WTC11 (cell line): ENCODE measurements at regions of chr7 and their contacts with region 1.

Region 1: DNA sequence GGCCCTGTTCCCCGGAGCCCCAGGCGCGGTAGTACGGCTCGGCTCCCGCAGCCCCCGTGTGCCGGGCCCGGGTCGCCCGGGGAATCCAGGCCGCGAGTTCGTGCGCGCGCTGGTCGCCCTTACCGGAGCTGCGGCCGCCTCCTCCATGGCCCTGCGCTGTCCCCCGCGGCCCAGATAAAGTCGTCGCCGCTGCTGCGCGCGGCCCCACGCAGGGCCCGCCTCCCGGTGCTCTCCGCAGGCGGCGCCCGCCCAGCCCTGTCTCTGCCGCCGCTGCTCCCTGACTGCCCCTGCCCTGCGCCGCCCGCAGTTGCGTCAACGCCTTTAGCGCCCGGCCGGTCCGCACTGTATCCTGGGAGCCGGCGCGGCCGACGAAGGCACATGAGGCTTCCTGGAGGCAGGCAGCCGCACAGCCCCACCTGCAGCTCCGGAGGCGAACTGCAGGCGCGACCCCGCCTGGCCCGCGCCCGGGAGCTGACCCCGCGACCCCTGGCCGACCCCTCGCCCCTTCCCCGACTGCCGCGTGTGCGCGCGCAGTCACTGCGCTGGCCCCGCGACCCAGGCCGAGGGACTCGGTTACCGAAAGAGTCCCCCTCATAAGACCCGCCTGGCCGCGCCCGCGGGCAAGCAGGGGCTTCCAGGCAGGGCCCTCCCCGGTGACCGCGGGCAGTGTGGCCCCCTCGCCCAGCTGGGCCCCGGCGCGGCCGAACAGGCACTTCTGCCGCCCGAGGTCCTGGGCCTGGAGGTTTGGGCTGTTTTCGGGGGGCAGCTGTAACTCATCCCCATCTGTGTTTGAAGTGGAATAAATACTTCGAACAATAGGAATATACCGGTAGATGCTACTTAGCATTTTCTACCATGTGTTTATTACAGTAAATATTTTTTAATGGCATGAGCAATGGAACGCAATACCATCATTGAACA is 127.1 kb upstream of the ZNF746 start:
- DNase-seq: peak; percentile 94
- ATAC-seq: peak; percentile 91
- H3K4me3 Mint-ChIP-seq: peak overlapping the region; percentile 76
- H3K27ac Mint-ChIP-seq: no peak overlapping the region
- H3K4me1 Mint-ChIP-seq: peaks cover 24% of the 10 kb centered on the region
- H3K27me3 Mint-ChIP-seq: peaks cover 14% of the 10 kb centered on the region
- CTCF ChIP-seq: peak; percentile 85

Region 2: DNA sequence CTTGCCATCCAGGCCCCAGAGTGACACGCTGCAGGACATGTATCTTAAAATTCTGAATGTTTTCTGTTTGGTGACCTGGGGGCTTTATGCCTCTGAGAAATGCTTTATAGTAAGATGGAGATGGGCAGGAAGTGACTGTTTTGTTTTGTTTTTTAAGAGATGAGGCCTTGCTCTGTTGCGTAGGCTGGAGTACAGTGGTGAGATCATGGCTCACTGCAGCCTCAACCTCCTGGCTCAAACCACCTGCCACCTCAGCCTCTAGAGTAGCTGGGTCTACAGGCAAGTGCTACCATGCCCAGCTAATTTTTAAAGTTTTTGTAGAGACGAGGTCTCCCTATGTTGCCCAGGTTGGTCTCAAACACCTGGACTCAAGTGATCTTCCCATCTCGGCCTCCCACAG is 184.5 kb before region 1 on chr7:
- CTCF ChIA-PET with region 1: no interaction called
- POLR2A ChIA-PET with region 1: no interaction called
- DNase-seq: no peak
- ATAC-seq: no peak
- H3K4me3 Mint-ChIP-seq: no peak overlapping the region
- H3K27ac Mint-ChIP-seq: no peak overlapping the region
- H3K4me1 Mint-ChIP-seq: no peaks in the 10 kb centered on the region
- H3K27me3 Mint-ChIP-seq: no peaks in the 10 kb centered on the region
- CTCF ChIP-seq: no peak

Region 3: DNA sequence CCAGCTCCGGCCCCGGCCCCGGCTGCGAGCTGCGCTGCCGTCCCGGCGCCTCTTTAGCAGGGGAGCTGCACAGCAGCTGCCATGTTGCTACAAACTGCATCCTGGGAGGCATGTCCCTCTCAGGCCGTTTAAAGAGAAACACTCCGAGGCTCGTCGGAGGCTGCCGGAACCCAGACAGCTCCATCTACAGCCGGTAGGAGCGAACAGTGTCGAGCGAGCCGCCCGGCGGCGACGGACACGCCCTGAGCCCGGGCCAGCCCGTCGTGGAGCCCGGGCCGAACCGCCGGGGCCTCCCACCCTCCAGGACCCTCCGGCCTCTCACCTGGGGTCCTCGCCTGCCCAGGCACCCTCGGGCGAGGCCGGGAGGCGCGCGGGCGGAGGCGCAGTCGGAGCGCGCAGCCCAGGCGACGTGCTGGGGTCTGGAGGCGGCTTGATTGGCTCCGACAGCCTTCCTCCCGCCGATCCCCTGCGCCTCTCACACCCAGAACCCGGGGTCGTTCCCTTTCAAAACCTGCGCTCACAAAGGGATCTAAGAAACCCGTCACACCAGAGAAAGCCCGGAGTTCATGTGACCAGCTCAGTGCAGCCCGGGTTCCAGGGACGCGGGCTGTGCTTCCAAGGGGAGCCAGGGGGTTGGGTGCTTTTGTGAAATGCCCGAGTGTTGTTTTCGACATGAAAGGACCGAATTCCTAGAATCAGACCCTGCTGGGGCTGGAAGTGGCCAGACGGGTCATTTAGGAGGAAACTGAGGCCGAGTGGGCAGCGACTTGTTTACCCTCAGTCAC is 164.0 kb before region 1 on chr7 and contains the start of gene ZNF777:
- CTCF ChIA-PET with region 1: interaction called, 10 read pairs
- POLR2A ChIA-PET with region 1: no interaction called
- DNase-seq: peak; percentile 79
- ATAC-seq: peak; percentile 90
- H3K4me3 Mint-ChIP-seq: peak within 1 kb of the TSS; percentile 80
- H3K27ac Mint-ChIP-seq: peak within 1 kb of the TSS; percentile 65; the same call in 1 of the 2 replicates
- H3K4me1 Mint-ChIP-seq: peaks cover 17% of the 10 kb centered on the region
- H3K27me3 Mint-ChIP-seq: peaks cover 36% of the 10 kb centered on the region
- CTCF ChIP-seq: no peak
- total RNA-seq, gene ZNF777: 12.0 to 13.6 TPM (median 12.6 TPM) in 3 replicates

Region 4: DNA sequence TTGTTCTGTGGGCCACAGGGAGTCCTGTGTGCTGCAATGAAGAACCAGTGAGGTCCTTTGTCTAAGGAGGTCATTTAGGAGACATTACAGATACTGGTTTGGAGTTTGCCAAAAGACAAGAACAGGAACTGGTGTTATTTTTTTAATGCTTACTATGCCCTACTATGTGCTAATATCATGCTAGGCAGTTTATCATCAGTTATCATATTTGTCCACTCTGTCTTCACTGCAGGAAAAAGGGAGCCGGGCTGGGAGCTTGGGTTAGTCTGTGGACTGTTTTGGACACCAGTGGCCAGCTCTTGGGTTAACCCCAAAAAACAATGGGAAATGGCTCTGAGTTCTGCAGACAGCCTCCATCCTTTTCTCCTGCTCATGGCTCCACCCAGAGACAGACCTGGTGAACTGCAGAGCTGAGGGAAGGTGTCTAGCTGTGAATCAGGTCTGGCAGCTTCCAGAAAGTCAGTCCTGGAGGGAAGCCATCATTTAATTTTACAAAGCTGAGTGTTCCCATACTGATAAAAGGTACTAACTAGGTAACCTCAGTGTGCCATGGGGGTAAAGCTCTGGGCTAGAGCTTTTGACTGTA is 25.9 kb before region 1 on chr7:
- CTCF ChIA-PET with region 1: interaction called, 10 read pairs
- POLR2A ChIA-PET with region 1: interaction called, 5 read pairs
- DNase-seq: peak; percentile 55
- ATAC-seq: peak; percentile 96
- H3K4me3 Mint-ChIP-seq: no peak overlapping the region
- H3K27ac Mint-ChIP-seq: no peak overlapping the region
- H3K4me1 Mint-ChIP-seq: no peaks in the 10 kb centered on the region
- H3K27me3 Mint-ChIP-seq: no peaks in the 10 kb centered on the region
- CTCF ChIP-seq: no peak

Region 5: GRCh38 chr7:149635561-149636329 is 11.1 kb after region 1 on chr7:
- CTCF ChIA-PET with region 1: interaction called, 20 read pairs
- POLR2A ChIA-PET with region 1: no interaction called
- DNase-seq: peak; percentile 76
- ATAC-seq: peak; percentile 97
- H3K4me3 Mint-ChIP-seq: peak overlapping the region; percentile 15; the same call in 1 of the 2 replicates
- H3K27ac Mint-ChIP-seq: 0 out of 2 replicates have a peak overlapping the region, but pooled peaks have one; percentile 50
- H3K4me1 Mint-ChIP-seq: peaks cover 4% of the 10 kb centered on the region; the same call in 1 of the 2 replicates
- H3K27me3 Mint-ChIP-seq: peaks cover 18% of the 10 kb centered on the region
- CTCF ChIP-seq: no peak

Region 6: DNA sequence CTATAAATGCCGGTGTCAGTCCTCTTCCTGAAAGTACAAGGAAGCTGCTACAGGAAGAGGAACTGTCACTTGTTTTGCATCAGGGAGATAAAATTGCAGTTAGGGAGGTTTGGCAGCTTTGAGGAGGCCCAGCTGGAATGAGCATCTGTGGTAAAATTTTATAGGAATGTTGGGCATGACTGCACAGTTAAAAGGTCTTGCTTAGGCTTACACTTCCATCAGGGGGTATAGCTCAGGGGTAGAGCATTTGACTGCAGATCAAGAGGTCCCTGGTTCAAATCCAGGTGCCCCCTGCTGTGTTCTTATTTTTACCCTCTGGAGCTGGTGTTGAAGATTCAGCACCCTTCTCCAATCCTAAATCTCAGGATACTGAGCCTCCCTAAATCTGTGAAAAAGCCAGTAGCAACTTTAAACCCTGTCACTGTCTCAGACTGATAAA is 82.8 kb after region 1 on chr7:
- CTCF ChIA-PET with region 1: interaction called, 19 read pairs
- POLR2A ChIA-PET with region 1: no interaction called
- DNase-seq: no peak
- ATAC-seq: no peak
- H3K4me3 Mint-ChIP-seq: no peak overlapping the region
- H3K27ac Mint-ChIP-seq: no peak overlapping the region
- H3K4me1 Mint-ChIP-seq: peaks cover 24% of the 10 kb centered on the region
- H3K27me3 Mint-ChIP-seq: peaks cover 12% of the 10 kb centered on the region
- CTCF ChIP-seq: no peak

Region 7: GRCh38 chr7:149742075-149742701 is 117.5 kb after region 1 on chr7:
- CTCF ChIA-PET with region 1: interaction called, 19 read pairs
- POLR2A ChIA-PET with region 1: no interaction called
- DNase-seq: peak; percentile 88
- ATAC-seq: peak; percentile 96
- H3K4me3 Mint-ChIP-seq: peak overlapping the region; percentile 73
- H3K27ac Mint-ChIP-seq: no peak overlapping the region
- H3K4me1 Mint-ChIP-seq: peaks cover 3% of the 10 kb centered on the region
- H3K27me3 Mint-ChIP-seq: peaks cover 15% of the 10 kb centered on the region
- CTCF ChIP-seq: peak; percentile 75

Region 8: DNA sequence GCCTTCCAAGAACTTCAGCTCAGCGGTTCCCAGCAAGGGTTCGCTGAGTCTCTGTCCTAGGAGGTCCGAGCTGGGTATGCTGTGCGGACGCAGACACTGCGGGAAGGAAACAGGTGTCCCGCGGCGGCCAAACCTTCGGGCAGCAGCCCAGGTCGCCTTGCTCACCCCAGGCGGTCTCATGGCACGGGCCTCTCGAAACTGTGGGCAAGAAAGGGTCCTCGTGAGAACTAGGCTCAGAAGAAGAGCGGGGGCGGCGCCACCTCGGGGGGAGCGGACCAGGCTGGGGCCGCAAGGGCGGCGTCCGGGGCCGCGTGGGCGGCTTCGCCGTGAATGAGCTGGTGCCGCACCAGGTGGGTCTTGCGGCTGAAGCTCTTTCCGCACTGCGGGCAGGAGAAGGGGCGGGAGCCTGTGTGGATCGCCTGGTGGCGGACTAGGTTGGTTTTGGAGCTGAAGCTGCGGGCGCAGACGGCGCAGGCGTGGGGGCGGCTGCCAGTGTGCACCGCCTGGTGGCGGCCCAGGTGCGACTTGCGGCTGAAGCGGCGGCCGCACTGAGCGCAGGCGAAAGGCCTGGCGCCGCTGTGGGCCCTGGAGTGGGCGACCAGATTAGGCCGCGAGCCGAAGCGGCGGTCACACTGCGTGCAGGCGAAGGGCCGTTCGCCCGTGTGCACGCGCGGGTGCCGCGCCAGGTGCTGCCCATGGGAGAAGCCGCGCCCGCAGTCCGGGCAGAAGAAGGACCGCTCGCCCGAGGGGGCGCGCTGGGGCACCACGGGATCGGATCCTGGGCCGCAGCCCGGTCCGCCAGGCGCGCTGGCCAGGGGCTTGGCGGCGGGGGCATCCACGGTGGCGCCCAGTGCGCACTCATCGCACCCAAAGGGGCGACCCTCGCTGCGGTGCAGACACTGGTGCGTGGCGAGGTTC is 140.1 kb after region 1 on chr7:
- CTCF ChIA-PET with region 1: interaction called, 11 read pairs
- POLR2A ChIA-PET with region 1: no interaction called
- DNase-seq: peak; percentile 71
- ATAC-seq: peak; percentile 78
- H3K4me3 Mint-ChIP-seq: peak overlapping the region; percentile 75
- H3K27ac Mint-ChIP-seq: no peak overlapping the region
- H3K4me1 Mint-ChIP-seq: peaks cover 12% of the 10 kb centered on the region
- H3K27me3 Mint-ChIP-seq: peaks cover 100% of the 10 kb centered on the region
- CTCF ChIP-seq: no peak